ENCODE measurements at regions of chr2 and their contacts with region 1.

Region 1: GRCh38 chr2:217785544-217786045 is 217.2 kb downstream of the TNS1 start:
- DNase-seq: peak; percentile 85
- H3K4me3 Mint-ChIP-seq: no peak overlapping the region
- H3K27ac Mint-ChIP-seq: no peak overlapping the region
- H3K4me1 Mint-ChIP-seq: peaks cover 21% of the 10 kb centered on the region
- H3K27me3 Mint-ChIP-seq: no peaks in the 10 kb centered on the region

Region 2: DNA sequence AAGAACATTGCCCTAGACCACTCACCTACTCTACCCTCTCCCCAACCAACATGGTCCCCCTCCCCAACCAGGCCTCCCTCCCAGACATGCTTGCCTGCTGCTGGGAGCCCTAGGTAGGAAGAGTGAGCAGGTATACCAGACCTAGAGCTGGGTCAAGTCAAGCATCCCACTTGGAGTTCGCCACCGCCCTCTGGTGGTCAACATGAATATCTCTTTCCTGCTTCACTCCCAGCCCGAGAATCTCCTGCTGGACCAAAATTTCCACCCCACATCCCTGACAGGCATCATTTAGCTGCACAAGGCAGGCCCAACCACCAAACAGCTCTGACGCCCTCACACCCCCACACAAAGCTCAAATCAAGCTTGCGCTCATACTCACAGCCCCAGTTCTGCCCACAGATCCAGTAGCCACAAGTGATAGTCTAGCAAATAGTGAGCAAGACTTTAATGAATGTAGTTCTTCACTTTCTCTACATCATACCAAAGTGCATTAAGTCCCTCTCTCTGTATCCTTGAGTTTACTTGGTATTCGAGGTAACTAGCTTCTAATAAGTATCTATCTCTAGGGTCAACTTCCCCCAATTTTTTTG is 101.2 kb after region 1 on chr2:
- CTCF ChIA-PET with region 1: interaction called, 99 read pairs
- POLR2A ChIA-PET with region 1: no interaction called
- intact Hi-C with region 1: loop called (anchors 1 kb)
- DNase-seq: peak; percentile 75
- H3K4me3 Mint-ChIP-seq: no peak overlapping the region
- H3K27ac Mint-ChIP-seq: no peak overlapping the region
- H3K4me1 Mint-ChIP-seq: peaks cover 3% of the 10 kb centered on the region
- H3K27me3 Mint-ChIP-seq: peaks cover 2% of the 10 kb centered on the region

Region 3: DNA sequence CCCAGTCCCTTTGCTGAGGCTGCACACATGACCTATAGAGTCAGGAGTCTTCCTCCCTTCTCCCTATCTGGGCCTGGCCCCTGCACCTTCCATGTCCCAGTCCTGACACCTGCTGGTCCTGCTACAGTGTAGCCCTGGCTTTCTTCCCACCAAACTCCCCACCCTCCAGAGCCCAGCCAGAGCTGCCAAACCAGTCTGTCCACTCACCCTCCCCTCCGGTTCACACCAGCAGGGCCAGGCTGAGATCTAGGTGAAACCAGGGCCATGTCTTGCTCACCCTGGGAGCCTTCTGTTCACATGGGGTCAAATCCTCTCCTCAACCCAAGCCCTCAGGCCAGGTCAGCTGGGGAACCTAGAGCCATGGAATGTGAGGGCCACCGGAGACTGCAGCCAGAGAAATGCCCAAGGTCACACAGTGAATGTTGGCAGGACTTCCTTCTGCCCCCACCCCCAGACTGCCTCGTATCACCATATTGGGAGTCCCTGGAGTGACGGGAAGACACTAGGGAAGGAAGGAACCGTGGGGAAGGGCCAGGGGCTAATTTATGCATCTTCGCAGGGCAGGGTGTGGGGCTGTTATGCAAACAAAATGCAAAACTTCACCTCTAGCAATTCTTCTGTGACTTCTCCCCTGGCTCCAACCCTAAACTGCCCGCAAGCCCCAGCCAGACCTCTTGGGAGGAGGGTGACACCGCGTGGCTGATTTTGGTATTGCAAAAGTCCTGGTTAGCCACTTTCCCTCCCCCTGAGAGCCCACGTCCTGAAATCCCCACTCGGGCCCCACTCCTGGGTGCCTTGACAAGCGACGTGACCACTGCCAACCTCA is 202.6 kb after region 1 on chr2:
- CTCF ChIA-PET with region 1: interaction called, 57 read pairs
- POLR2A ChIA-PET with region 1: interaction called, 3 read pairs
- intact Hi-C with region 1: loop called (anchors 1 kb)
- DNase-seq: peak; percentile 78
- H3K4me3 Mint-ChIP-seq: no peak overlapping the region
- H3K27ac Mint-ChIP-seq: no peak overlapping the region
- H3K4me1 Mint-ChIP-seq: peaks cover 3% of the 10 kb centered on the region
- H3K27me3 Mint-ChIP-seq: peaks cover 5% of the 10 kb centered on the region

Region 4: DNA sequence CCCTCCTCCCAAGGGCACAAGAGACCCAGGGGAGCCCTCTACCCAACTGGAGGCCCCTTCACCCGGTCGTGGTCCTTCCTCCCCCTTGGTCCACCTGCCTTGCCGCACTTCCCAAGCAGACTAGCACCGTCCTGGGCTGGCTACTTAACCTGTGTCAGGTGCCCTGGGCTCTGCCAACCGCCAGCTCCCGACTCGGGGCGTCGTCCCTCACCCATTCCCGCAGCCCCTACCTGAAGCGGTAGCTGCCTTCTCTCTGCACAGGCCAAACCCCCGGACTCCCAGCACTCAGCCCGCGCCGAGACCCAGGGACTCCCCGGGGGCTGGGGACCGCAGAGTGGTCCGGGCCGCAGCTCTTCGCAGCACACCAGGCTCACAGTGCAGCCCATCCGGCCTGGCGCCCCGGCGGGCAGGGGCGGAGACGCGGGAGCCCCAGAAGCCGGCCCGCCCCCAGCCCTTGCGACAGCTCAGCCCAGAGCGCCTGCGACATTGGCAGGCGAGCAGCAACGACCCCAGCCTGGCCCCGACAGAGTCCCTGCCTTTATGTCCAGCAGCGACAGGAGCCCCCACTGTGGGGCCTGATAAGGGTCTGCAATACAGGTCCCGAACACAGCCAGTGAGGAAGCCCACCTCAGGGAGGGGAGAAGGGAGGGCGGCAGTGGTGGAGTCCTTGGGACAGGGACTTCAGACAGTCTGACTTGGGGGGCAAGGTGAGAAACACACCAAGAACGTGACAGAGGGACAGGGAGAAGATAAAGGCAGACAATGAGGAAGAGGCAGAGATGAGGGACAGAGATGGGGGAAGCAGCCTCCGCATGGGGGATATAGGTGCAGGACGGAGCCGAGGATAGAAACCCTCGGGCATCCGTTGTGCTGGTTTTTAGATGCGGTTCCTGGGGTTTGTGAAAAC is 248.2 kb after region 1 on chr2:
- CTCF ChIA-PET with region 1: interaction called, 21 read pairs
- POLR2A ChIA-PET with region 1: no interaction called
- intact Hi-C with region 1: loop called (anchors 1 kb)
- DNase-seq: no peak
- H3K4me3 Mint-ChIP-seq: no peak overlapping the region
- H3K27ac Mint-ChIP-seq: no peak overlapping the region
- H3K4me1 Mint-ChIP-seq: peaks cover 11% of the 10 kb centered on the region
- H3K27me3 Mint-ChIP-seq: no peaks in the 10 kb centered on the region

Region 5: DNA sequence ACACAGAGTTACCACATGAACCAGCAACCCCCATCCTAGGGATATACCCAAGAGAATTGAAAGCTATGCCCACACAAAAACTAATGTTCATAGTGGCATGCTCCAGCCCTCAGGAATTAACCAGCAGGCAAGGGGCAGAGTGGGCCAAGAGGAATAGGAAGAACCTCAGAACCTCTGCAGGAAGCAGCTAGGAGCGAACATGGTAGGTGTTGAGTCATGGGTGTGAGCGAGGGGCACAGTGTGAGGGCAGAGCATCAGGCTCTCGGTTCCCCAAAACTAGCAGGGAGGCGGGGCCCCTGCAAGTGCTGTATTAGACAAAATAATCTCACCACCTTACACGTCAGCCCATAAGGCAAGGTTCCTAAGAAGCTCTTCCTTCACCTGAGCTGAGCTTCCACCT is 277.9 kb after region 1 on chr2:
- CTCF ChIA-PET with region 1: interaction called, 14 read pairs
- POLR2A ChIA-PET with region 1: no interaction called
- intact Hi-C with region 1: loop called (anchors 1 kb)
- DNase-seq: no peak
- H3K4me3 Mint-ChIP-seq: no peak overlapping the region
- H3K27ac Mint-ChIP-seq: no peak overlapping the region
- H3K4me1 Mint-ChIP-seq: peaks cover under 1% of the 10 kb centered on the region
- H3K27me3 Mint-ChIP-seq: peaks cover 26% of the 10 kb centered on the region

Measured in activated CD4-positive, alpha-beta memory T cell treated with anti-CD3 and anti-CD28 coated beads for 36 hours (primary cell).